Prostate gland (tissue), 2 donors: ENCODE measurements at regions of chr19 and their contacts with region 1.

Region 1: DNA sequence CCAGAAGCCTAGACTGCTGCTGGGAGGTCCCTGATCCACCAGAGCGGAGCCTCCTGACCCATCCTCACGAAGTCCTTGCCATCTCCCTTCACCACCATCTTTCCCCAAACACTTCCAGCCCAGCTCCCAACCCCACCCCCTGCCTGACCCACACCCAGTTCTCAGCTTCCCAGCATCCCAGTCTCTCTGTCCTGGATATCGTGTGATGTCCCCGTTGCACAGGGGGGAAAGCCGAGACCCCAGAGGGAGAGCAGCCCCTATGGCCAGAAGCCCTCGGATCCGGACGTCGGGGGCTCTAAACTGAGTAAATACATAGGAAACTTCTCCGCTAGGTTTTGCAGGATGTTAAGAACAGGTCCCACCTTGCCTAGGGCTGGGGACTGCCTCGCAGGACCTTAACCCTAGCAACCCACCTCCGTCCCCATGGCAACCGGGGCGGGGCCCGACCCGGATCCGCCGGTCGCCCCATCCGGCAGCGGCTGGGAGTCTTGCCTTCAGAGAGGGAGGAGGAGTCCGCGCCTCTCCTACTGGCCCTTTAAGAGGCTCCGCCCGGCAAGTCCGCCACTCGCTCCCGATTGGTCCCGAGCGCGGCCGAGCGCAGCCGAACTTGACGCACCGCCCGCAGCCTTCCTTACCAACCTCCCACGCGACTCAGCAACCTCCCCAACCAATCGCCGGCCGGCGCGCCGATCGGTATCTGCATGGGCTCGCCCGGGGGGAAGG is 451 bp upstream of the HMG20B start:
- DNase-seq: peak; percentile 100
- H3K4me3 ChIP-seq: peak overlapping the region; percentile 97 to 99
- H3K27ac ChIP-seq: peak overlapping the region; percentile 87 to 89
- H3K4me1 ChIP-seq: no peaks in the 10 kb centered on the region
- H3K27me3 ChIP-seq: no peaks in the 10 kb centered on the region
- CTCF ChIP-seq: peak in 1 of 4 experiments; percentile 21
- POLR2A ChIP-seq: peak; percentile 13

Region 2: DNA sequence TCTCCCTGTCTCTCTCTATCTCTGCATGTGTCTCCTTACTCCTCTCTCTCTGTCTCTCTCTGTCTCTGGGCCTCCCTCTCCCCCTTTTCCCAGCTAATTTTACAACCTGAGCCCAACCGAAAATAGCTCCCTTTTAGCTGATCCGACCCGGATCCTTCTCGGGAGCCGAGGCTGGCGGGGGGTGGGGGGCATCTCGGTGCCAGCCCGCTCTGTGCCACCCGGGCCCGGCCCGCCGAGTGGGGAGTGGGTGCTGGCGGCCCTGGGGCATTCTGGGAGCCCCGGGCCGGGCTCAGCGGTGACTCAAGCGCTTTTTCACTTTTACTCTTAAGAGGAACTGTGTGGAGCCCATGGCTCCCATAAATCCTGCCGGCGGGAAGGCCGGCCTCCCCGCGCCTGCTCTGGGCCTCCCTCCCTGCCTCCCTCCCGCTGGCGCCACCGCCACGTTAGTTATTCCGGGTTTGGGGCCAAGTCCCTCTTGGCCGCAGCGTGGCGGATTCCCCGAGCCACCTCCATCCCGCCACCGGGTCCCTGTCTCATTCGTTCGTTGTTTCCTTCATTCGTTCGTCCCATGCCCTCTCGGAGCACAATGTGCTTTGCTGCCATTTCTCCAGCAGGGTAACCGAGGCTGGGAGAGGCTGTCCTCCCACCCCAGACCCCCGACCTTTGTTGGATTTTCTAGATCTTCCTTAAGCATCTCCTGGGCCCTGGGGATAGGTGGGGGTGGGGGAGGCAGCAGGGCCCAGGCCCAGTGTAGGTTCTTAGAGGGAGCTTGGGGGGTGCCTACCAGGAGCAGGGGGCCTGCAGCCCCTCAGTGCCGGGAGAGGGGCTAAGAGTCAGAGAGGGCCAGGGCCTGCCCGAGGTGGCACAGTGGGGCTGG is 202.7 kb before region 1 on chr19:
- intact Hi-C with region 1: no loop called
- DNase-seq: peak; percentile 72
- H3K4me3 ChIP-seq: peak overlapping the region; percentile 79 to 99
- H3K27ac ChIP-seq: peak overlapping the region; percentile 96 to 100
- H3K4me1 ChIP-seq: peaks cover 23% of the 10 kb centered on the region
- H3K27me3 ChIP-seq: no peaks in the 10 kb centered on the region
- CTCF ChIP-seq: peak in 1 of 4 experiments; percentile 7
- POLR2A ChIP-seq: peak; percentile 66

Region 3: GRCh38 chr19:3505598-3506383 is 66.5 kb before region 1 on chr19 and contains the start of gene FZR1:
- intact Hi-C with region 1: loop called (anchors 10 kb)
- DNase-seq: peak; percentile 98
- H3K4me3 ChIP-seq: peak within 1 kb of the TSS; percentile 76 to 98
- H3K27ac ChIP-seq: peak within 1 kb of the TSS; percentile 74
- H3K4me1 ChIP-seq: no peaks in the 10 kb centered on the region
- H3K27me3 ChIP-seq: no peaks in the 10 kb centered on the region
- CTCF ChIP-seq: peak in 2 of 4 experiments; percentile 6 to 12
- POLR2A ChIP-seq: peak; percentile 72
- total RNA-seq, gene FZR1: 32.2 to 64.9 TPM

Region 4: GRCh38 chr19:3557461-3558248 is 14.6 kb before region 1 on chr19 and contains the start of gene MFSD12:
- intact Hi-C with region 1: loop called (anchors 2 kb)
- DNase-seq: peak; percentile 94
- H3K4me3 ChIP-seq: peak within 1 kb of the TSS; percentile 73 to 79
- H3K27ac ChIP-seq: peak within 1 kb of the TSS; percentile 61 to 77
- H3K4me1 ChIP-seq: no peaks in the 10 kb centered on the region
- H3K27me3 ChIP-seq: no peaks in the 10 kb centered on the region
- CTCF ChIP-seq: peak in 2 of 4 experiments; percentile 2
- POLR2A ChIP-seq: peak; percentile 80
- total RNA-seq, gene MFSD12: 60.5 to 86.1 TPM